ENCODE measurements at regions of chr1 and their contacts with region 1.

Region 1: DNA sequence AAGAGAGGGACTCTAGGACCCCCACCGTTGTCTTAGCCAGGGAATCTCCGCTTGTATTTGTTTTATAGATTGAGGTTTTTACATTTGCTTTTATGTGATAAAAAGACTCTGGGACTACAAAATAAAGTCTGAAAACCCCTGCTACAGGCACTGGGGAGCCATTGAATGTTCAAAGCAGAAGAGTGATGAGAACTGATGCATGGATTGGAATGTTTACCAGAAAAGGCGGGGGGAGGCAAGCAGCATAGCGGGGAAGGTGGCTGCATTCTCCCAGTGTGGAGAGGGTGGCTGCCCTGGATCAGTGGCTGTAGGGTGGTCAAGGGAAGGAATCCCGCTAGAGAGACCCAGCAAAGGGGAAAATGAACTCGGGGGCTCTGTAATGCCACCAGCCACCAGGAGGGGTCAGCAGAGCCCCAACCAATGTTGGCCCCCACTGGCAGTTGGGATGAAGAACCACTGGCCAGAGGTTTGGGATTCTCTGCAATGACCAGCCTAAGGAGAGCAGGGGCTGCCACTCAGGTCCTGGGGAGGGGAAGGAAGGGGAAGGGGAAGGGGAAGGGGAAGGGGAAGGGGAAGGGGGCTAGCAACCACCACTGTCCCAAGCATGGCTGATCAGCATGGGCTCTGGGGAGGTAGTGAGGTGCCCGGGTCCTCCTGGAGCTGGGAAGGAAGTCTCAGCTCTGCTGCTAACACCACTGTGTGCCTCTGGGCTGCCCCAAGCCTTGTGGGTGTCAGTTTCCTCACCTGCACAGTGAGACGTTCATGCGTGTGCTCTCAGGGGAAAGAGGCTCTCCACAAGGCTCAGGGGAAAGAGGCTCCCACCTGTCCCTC is 19.2 kb upstream of the PEF1 start:
- DNase-seq: peak in 1 of 2 experiments; percentile 67
- H3K4me3 ChIP-seq: no peak overlapping the region
- H3K27ac ChIP-seq: no peak overlapping the region
- H3K4me1 ChIP-seq: peaks cover 18% of the 10 kb centered on the region
- H3K27me3 ChIP-seq: no peaks in the 10 kb centered on the region
- CTCF ChIP-seq: peak; percentile 100

Region 2: DNA sequence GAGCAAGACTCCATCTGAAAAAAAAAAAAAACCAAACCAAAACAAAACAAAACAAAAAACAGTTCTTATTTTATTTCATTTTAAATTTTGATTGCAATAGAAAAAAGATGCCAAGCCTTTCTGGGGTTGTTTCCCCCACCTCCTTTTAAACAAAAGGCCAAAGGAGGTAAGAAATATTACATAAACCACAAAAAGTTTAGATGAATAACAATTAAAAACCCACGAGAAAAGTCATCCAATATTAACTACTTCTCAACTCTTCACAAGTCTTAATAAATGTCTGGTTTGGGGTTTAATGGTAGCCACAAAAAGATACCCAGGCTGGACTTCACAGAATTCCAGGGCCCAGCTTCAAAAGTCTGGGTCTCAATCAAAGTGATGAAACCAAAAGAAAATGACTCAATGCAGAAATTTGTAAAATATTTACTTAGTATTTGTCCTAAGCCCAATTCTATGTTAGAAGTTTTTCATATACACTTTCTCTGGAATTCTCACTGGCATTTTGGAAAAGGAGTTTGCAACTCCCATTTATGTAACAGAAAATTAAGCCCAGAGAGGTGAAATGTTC is 708.3 kb before region 1 on chr1:
- CTCF ChIA-PET with region 1: no interaction called
- POLR2A ChIA-PET with region 1: no interaction called
- intact Hi-C with region 1: no loop called
- DNase-seq: no peak
- H3K4me3 ChIP-seq: no peak overlapping the region
- H3K27ac ChIP-seq: no peak overlapping the region
- H3K4me1 ChIP-seq: no peaks in the 10 kb centered on the region
- H3K27me3 ChIP-seq: no peaks in the 10 kb centered on the region
- CTCF ChIP-seq: no peak

Region 3: GRCh38 chr1:31705080-31705866 is 41.4 kb after region 1 on chr1:
- CTCF ChIA-PET with region 1: interaction called, 10 read pairs
- POLR2A ChIA-PET with region 1: no interaction called
- intact Hi-C with region 1: loop called (anchors 5 kb)
- DNase-seq: no peak
- H3K4me3 ChIP-seq: no peak overlapping the region
- H3K27ac ChIP-seq: no peak overlapping the region
- H3K4me1 ChIP-seq: peaks cover 49% of the 10 kb centered on the region
- H3K27me3 ChIP-seq: no peaks in the 10 kb centered on the region
- CTCF ChIP-seq: peak; percentile 53; the same call in 1 of the 2 replicates

Region 4: GRCh38 chr1:31715087-31715872 is 51.4 kb after region 1 on chr1:
- CTCF ChIA-PET with region 1: interaction called, 3 read pairs
- POLR2A ChIA-PET with region 1: interaction called, 3 read pairs
- intact Hi-C with region 1: loop called (anchors 1 kb)
- DNase-seq: peak; percentile 90 to 93
- H3K4me3 ChIP-seq: peak overlapping the region; percentile 59
- H3K27ac ChIP-seq: no peak overlapping the region
- H3K4me1 ChIP-seq: peaks cover 45% of the 10 kb centered on the region
- H3K27me3 ChIP-seq: peaks cover 7% of the 10 kb centered on the region; the same call in 1 of the 2 replicates
- CTCF ChIP-seq: peak; percentile 98

Region 5: DNA sequence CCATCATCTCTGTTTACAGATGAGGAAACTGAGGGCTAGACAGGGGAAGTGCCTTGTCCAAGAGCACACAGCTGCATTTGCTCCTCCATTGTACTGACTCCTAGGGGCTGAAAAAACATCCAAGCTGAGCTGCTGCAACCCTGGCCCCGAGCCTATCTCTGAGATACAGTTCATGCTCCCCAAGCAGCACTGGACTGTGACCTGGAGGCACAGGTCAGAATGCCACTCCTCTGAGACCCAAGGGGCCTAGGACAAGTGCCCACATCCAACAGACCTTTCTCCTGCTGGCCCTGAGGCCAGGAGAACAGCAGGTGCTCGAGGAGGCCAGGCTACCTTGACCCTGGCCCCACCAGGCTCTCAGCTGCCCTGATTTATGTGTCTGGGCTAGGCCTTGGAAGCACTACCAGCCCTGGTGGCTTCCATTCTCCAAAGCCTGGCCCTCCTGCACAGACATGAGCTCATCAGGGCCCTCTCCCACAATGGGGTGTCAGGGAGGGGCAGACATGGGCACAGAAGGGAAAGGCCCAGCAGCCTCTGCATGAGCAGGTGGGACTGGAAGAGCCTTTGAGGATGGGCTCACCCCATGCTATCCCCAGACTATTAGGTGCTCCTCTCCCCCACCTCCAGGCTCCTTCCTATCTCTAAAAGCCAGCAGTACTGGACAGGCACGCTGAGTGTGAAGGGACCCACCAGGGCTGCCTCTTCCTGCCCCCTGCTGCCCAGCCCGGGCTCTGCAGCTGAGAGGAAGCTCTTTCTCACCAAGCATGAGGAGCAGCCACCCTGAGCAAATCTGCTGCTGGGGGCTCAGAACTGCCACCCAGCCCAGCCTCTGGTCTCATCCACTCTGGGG is 81.5 kb after region 1 on chr1:
- CTCF ChIA-PET with region 1: interaction called, 7 read pairs
- POLR2A ChIA-PET with region 1: no interaction called
- intact Hi-C with region 1: loop called (anchors 1 kb)
- DNase-seq: peak; percentile 61 to 68
- H3K4me3 ChIP-seq: no peak overlapping the region
- H3K27ac ChIP-seq: no peak overlapping the region
- H3K4me1 ChIP-seq: no peaks in the 10 kb centered on the region
- H3K27me3 ChIP-seq: no peaks in the 10 kb centered on the region
- CTCF ChIP-seq: peak; percentile 98

Region 6: DNA sequence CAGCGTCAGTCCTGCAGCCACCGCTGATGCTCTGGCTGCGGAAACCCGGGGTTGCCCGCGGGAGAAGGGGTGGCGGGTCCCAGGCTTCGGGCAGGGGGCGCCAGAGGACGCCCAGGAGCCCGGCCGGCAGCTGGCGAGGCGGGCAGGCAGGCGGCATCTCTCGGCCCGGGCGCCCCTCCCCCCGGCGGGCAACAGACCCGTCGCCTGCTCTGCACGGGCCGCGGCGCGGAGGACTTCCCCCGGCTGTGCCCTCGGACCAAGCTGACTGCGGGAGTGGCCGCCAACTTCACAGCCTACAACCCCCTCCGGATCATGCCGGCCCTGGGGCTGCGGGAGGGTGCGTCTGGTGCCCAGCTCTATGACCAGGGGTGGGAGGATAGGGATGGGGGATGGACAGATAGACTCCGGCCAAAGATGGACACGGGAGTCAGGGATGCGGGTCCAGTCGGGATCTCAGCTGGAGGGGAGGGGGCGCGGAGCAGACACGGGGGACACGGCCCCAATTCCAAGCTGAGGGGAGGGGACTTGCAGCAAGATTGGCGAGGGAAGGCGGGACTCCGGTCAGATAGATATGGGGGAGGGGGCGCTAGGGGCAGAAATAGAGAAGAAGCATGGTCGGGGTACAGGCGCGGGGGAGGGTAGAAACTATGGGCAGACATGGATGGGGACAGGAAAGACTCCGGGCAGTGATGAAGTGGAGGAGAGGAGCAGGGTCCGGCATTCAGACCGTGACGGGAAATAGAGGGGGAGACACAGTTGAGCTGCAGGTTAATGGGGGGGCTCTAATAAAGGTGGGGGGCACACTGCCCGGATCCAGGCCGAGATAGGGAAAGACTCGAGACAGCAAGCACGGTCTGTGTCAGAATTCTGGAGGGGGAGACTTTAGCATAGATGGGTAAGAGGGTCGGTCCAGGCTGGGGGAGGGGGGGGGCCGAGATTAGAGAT is 99.2 kb after region 1 on chr1:
- CTCF ChIA-PET with region 1: no interaction called
- POLR2A ChIA-PET with region 1: no interaction called
- intact Hi-C with region 1: no loop called
- DNase-seq: peak; percentile 65 to 88
- H3K4me3 ChIP-seq: peak overlapping the region; percentile 62
- H3K27ac ChIP-seq: no peak overlapping the region
- H3K4me1 ChIP-seq: peaks cover 32% of the 10 kb centered on the region
- H3K27me3 ChIP-seq: peaks cover 5% of the 10 kb centered on the region; the same call in 1 of the 2 replicates
- CTCF ChIP-seq: peak; percentile 90

Region 7: GRCh38 chr1:32413507-32414185 is 749.8 kb after region 1 on chr1:
- CTCF ChIA-PET with region 1: no interaction called
- POLR2A ChIA-PET with region 1: no interaction called
- intact Hi-C with region 1: loop called (anchors 10 kb)
- DNase-seq: peak; percentile 50 to 63
- H3K4me3 ChIP-seq: no peak overlapping the region
- H3K27ac ChIP-seq: no peak overlapping the region
- H3K4me1 ChIP-seq: no peaks in the 10 kb centered on the region
- H3K27me3 ChIP-seq: 0 out of 2 replicates have a peak, but pooled peaks cover 7% of the 10 kb centered on the region
- CTCF ChIP-seq: peak; percentile 97